ENCODE measurements at regions of chr2 and their contacts with region 1.

Region 1: GRCh38 chr2:111116843-111117597 is 3.7 kb upstream of the BCL2L11 start:
- DNase-seq: peak; percentile 52 to 66 (median 59)
- ATAC-seq: peak; percentile 17; the same call in 2 of the 3 replicates
- H3K4me3 ChIP-seq: no peak overlapping the region
- H3K27ac ChIP-seq: no peak overlapping the region
- H3K4me1 ChIP-seq: peaks cover 0 to 23% of the 10 kb centered on the region in 2 experiments; a peak in 2 of 5 replicates
- H3K27me3 ChIP-seq: no peaks in the 10 kb centered on the region
- CTCF ChIP-seq: peak; percentile 67 to 75 (median 68)
- EP300 ChIP-seq: no peak
- POLR2A ChIP-seq: no peak
- RAD21 ChIP-seq: peak; percentile 7 to 74; a peak in 2 of 4 replicates

Region 2: GRCh38 chr2:110818767-110819481 is 298.1 kb before region 1 on chr2:
- CTCF ChIA-PET with region 1: no interaction called
- POLR2A ChIA-PET with region 1: interaction called, 3 read pairs
- in situ Hi-C with region 1: no loop called
- intact Hi-C with region 1: loop called (anchors 10 kb)
- DNase-seq: no peak
- ATAC-seq: no peak
- H3K4me3 ChIP-seq: no peak overlapping the region
- H3K27ac ChIP-seq: no peak overlapping the region
- H3K4me1 ChIP-seq: no peaks in the 10 kb centered on the region
- H3K27me3 ChIP-seq: peaks cover 6 to 24% of the 10 kb centered on the region in 2 experiments; a peak in 3 of 5 replicates
- CTCF ChIP-seq: peak; percentile 13 to 22 (median 18); a peak in 3 of 6 replicates
- EP300 ChIP-seq: no peak
- POLR2A ChIP-seq: no peak
- RAD21 ChIP-seq: no peak

Region 3: GRCh38 chr2:111155610-111156009 is 38.6 kb after region 1 on chr2:
- CTCF ChIA-PET with region 1: no interaction called
- POLR2A ChIA-PET with region 1: no interaction called
- in situ Hi-C with region 1: no loop called
- intact Hi-C with region 1: no loop called
- DNase-seq: no peak
- ATAC-seq: no peak
- H3K4me3 ChIP-seq: no peak overlapping the region
- H3K27ac ChIP-seq: no peak overlapping the region
- H3K4me1 ChIP-seq: no peaks in the 10 kb centered on the region
- H3K27me3 ChIP-seq: no peaks in the 10 kb centered on the region
- CTCF ChIP-seq: no peak
- EP300 ChIP-seq: no peak
- POLR2A ChIP-seq: no peak
- RAD21 ChIP-seq: no peak

Region 4: DNA sequence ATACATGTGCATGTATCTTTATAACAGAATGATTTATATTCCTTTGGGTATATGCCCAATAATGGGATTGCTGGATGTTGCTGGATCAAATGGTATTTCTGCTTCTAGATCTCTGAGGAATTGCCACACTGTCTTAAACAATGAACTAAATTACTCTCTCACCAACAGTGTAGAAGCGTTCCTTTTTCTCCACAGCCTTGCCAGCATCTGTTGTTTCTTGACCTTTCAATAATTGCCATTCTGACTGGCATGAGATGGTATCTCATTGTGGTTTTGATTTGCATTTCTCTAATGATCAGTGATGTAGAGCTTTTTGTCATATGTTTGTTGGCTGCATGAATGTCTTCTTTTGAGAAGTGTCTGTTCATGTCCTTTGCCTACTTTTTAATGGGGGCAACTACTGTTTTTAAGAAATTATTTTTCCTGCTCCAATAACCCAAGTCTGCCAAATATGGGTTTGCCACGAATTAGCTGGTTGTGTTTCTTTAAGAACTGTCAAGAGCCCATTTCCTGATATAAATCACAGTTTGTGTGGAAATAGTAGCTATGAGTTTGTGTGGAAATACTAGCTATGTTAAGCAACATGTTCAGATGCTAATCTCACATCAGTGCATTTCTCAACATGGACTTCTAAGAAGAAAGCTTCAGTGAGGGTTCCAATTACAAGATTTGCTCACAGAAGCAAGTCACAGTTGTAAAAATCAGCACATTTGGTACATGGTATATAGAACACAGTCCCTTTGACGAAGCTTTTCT is 507.6 kb after region 1 on chr2:
- CTCF ChIA-PET with region 1: no interaction called
- POLR2A ChIA-PET with region 1: no interaction called
- in situ Hi-C with region 1: no loop called
- intact Hi-C with region 1: loop called (anchors 5 kb)
- DNase-seq: no peak
- ATAC-seq: no peak
- H3K4me3 ChIP-seq: no peak overlapping the region
- H3K27ac ChIP-seq: no peak overlapping the region
- H3K4me1 ChIP-seq: peaks cover 6 to 12% of the 10 kb centered on the region in 2 experiments; a peak in 4 of 5 replicates
- H3K27me3 ChIP-seq: no peaks in the 10 kb centered on the region
- CTCF ChIP-seq: no peak
- EP300 ChIP-seq: peak; percentile 52; the same call in 1 of the 2 replicates
- POLR2A ChIP-seq: no peak
- RAD21 ChIP-seq: no peak

Region 5: DNA sequence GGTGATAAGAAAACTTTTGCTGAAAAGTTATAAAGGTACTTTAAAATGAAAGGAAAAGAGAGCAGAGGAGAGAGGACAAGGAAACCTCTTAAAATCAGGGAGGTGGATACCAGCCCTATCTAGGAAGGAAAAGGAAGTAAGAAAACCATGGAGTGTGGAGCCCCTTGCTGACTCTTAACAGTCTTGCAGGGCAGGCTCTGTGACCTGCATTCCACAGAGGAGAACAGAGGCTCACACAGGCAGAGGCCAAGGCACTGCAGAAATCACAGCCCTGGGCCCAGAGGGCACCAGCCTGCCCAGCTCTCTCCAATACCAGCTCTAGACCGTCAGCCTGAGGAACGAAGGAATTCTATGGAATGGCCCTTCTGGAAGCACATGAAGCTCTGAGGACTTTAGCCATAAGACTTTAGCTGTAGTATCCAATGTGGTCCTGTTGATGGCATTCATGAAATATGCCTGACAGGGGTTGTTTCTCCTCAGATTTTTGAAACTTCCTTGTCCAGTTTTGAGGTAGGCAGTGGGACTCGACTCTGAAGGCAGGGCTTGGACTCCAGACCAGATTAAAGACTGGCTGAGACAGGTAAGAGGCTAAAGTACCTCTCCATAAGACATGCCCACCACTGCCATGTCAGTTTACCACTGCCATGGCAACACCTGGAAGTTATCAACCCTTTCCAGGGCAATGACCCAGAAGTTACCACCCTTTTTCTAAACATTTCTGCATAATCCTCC is 550.7 kb after region 1 on chr2:
- CTCF ChIA-PET with region 1: no interaction called
- POLR2A ChIA-PET with region 1: no interaction called
- in situ Hi-C with region 1: no loop called
- intact Hi-C with region 1: loop called (anchors 5 kb)
- DNase-seq: peak in 1 of 4 experiments; percentile 37
- ATAC-seq: peak; percentile 77
- H3K4me3 ChIP-seq: no peak overlapping the region
- H3K27ac ChIP-seq: no peak overlapping the region
- H3K4me1 ChIP-seq: peaks cover 7 to 16% of the 10 kb centered on the region in 2 experiments; a peak in 4 of 5 replicates
- H3K27me3 ChIP-seq: no peaks in the 10 kb centered on the region
- CTCF ChIP-seq: peak; percentile 31 to 70 (median 41); a peak in 3 of 6 replicates
- EP300 ChIP-seq: no peak
- POLR2A ChIP-seq: no peak
- RAD21 ChIP-seq: peak; percentile 83 to 84

Measured in K562 (cell line).